Heart left ventricle (tissue), 16 donors: ENCODE measurements at regions of chr11 and their contacts with region 1.

Region 1: GRCh38 chr11:43579171-43579918 is 101.2 kb upstream of the HSD17B12 start:
- DNase-seq: peak in 1 of 5 donors; percentile 62
- ATAC-seq: peak in 1 of 4 donors; percentile 27
- H3K4me3 ChIP-seq: peak overlapping the region; percentile 30 to 68 (median 54)
- H3K27ac ChIP-seq: no peak overlapping the region
- H3K4me1 ChIP-seq: peaks cover 0 to 81% (median 38%) of the 10 kb centered on the region in 12 donors
- H3K27me3 ChIP-seq: peaks cover 45 to 100% (median 79%) of the 10 kb centered on the region in 9 donors
- CTCF ChIP-seq: peak in 6 of 12 donors; percentile 11 to 30 (median 18)
- POLR2A ChIP-seq: no peak

Region 2: GRCh38 chr11:43511959-43512358 is 67.4 kb before region 1 on chr11:
- intact Hi-C with region 1: no loop called
- DNase-seq: no peak
- ATAC-seq: no peak
- H3K4me3 ChIP-seq: no peak overlapping the region
- H3K27ac ChIP-seq: no peak overlapping the region
- H3K4me1 ChIP-seq: no peaks in the 10 kb centered on the region
- H3K27me3 ChIP-seq: peaks cover 0 to 16% (median 0%) of the 10 kb centered on the region in 9 donors
- CTCF ChIP-seq: no peak
- POLR2A ChIP-seq: no peak

Region 3: DNA sequence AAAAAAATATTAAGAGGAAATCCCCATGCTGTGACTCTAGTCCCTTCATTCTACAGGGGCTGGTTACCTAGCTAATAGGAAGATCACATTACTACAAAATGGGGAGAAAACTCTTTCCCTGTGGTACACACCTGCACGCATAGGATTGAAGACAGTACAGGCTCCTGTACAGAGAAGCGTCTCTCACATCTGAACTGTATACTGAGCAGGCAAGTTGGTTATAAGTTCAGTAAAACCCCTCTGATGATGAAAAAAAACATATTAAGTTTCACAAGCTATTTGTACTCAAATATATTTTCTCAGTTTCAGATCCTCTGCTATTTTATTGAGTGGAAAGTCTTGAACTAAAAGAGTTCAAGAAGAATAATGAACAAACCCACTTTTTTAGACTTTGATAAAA is 55.7 kb before region 1 on chr11:
- intact Hi-C with region 1: no loop called
- DNase-seq: no peak
- ATAC-seq: no peak
- H3K4me3 ChIP-seq: no peak overlapping the region
- H3K27ac ChIP-seq: no peak overlapping the region
- H3K4me1 ChIP-seq: no peaks in the 10 kb centered on the region
- H3K27me3 ChIP-seq: peaks cover 0 to 6% (median 0%) of the 10 kb centered on the region in 9 donors
- CTCF ChIP-seq: no peak
- POLR2A ChIP-seq: no peak

Region 4: GRCh38 chr11:43643898-43644620 is 64.7 kb after region 1 on chr11:
- intact Hi-C with region 1: loop called in 1 of 10 experiments (anchors 5 kb)
- DNase-seq: peak; percentile 85 to 93 (median 89)
- ATAC-seq: peak; percentile 100
- H3K4me3 ChIP-seq: peak overlapping the region; percentile 67 to 94 (median 87)
- H3K27ac ChIP-seq: peak overlapping the region in 11 of 12 donors; percentile 58 to 87 (median 80)
- H3K4me1 ChIP-seq: peaks cover 0 to 22% (median 11%) of the 10 kb centered on the region in 12 donors
- H3K27me3 ChIP-seq: peaks cover 0 to 37% (median 16%) of the 10 kb centered on the region in 9 donors
- CTCF ChIP-seq: peak in 1 of 12 donors; percentile 18
- POLR2A ChIP-seq: peak in 1 of 2 donors; percentile 43

Region 5: DNA sequence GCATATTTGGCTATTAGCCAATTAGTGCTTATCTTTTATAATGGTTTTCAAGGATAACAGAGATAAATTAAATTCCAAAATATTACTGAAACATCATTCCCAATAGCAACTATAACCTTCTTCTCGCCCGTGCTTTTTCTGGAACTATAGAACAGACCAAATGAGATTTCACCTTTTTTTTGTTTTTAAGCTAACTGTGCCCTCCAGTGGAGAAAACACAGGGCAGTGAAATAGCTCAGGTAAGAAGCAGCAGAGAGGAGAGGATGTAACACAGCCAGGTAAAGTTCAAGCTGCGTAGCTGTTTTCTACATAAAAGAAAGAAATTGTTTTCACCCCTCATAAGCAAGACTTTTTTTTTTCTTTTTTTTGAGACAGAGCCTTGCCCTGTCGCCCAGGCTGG is 129.4 kb after region 1 on chr11:
- intact Hi-C with region 1: loop called in 2 of 10 experiments (anchors 10 kb)
- DNase-seq: no peak
- ATAC-seq: no peak
- H3K4me3 ChIP-seq: no peak overlapping the region
- H3K27ac ChIP-seq: no peak overlapping the region
- H3K4me1 ChIP-seq: no peaks in the 10 kb centered on the region
- H3K27me3 ChIP-seq: no peaks in the 10 kb centered on the region
- CTCF ChIP-seq: peak; percentile 16 to 62 (median 46)
- POLR2A ChIP-seq: no peak

Region 6: GRCh38 chr11:43810929-43811596 is 231.7 kb after region 1 on chr11:
- intact Hi-C with region 1: loop called in 4 of 10 experiments (anchors 5 to 10 kb)
- DNase-seq: no peak
- ATAC-seq: peak in 1 of 4 donors; percentile 42
- H3K4me3 ChIP-seq: no peak overlapping the region
- H3K27ac ChIP-seq: no peak overlapping the region
- H3K4me1 ChIP-seq: no peaks in the 10 kb centered on the region
- H3K27me3 ChIP-seq: no peaks in the 10 kb centered on the region
- CTCF ChIP-seq: peak; percentile 17 to 59 (median 46)
- POLR2A ChIP-seq: no peak

Region 7: GRCh38 chr11:43852057-43852636 is 272.8 kb after region 1 on chr11:
- intact Hi-C with region 1: loop called in 1 of 10 experiments (anchors 5 kb)
- DNase-seq: peak in 4 of 5 donors; percentile 21 to 34 (median 32)
- ATAC-seq: peak; percentile 51 to 72 (median 66)
- H3K4me3 ChIP-seq: no peak overlapping the region
- H3K27ac ChIP-seq: no peak overlapping the region
- H3K4me1 ChIP-seq: no peaks in the 10 kb centered on the region
- H3K27me3 ChIP-seq: no peaks in the 10 kb centered on the region
- CTCF ChIP-seq: peak; percentile 67 to 83 (median 72)
- POLR2A ChIP-seq: no peak